A549 (cell line): ENCODE measurements at regions of chr19 and their contacts with region 1.

Region 1: DNA sequence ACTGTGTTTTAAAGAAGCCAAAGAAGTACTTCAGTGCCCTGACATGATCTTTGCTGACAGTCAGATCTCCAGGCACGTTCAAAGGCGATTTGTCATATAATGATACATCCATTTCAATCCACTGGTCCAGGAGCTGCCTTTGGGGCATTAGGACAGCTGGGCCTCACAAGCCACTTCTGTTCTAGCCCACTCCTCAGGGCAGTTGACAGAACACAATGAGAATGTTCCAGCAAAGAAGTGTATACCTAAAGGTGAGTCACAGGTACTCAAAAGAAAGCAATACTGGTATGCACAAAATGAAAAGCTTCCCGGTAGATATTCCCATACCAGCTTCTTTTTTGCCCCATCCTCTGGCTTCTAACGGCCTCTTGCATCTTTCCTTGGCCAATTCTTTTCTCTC is 12.5 kb upstream of the MAP3K10 start:
- DNase-seq: no peak
- ATAC-seq: peak in 1 of 2 experiments; percentile 24; a peak in 2 of 6 replicates
- H3K4me3 ChIP-seq: no peak overlapping the region
- H3K27ac ChIP-seq: no peak overlapping the region
- H3K4me1 ChIP-seq: no peaks in the 10 kb centered on the region; the same call in 2 of the 3 replicates
- CTCF ChIP-seq: no peak
- EP300 ChIP-seq: no peak
- POLR2A ChIP-seq: no peak
- RAD21 ChIP-seq: no peak

Region 2: GRCh38 chr19:40155749-40156265 is 22.9 kb before region 1 on chr19:
- CTCF ChIA-PET with region 1: interaction called, 92 read pairs
- POLR2A ChIA-PET with region 1: no interaction called
- DNase-seq: peak; percentile 80 to 84
- ATAC-seq: peak; percentile 87 to 93
- H3K4me3 ChIP-seq: no peak overlapping the region
- H3K27ac ChIP-seq: peak overlapping the region in 1 of 2 experiments; percentile 42; a peak in 3 of 6 replicates
- H3K4me1 ChIP-seq: no peaks in the 10 kb centered on the region
- CTCF ChIP-seq: peak; percentile 73
- EP300 ChIP-seq: no peak
- POLR2A ChIP-seq: no peak
- RAD21 ChIP-seq: peak; percentile 72 to 82

Region 3: DNA sequence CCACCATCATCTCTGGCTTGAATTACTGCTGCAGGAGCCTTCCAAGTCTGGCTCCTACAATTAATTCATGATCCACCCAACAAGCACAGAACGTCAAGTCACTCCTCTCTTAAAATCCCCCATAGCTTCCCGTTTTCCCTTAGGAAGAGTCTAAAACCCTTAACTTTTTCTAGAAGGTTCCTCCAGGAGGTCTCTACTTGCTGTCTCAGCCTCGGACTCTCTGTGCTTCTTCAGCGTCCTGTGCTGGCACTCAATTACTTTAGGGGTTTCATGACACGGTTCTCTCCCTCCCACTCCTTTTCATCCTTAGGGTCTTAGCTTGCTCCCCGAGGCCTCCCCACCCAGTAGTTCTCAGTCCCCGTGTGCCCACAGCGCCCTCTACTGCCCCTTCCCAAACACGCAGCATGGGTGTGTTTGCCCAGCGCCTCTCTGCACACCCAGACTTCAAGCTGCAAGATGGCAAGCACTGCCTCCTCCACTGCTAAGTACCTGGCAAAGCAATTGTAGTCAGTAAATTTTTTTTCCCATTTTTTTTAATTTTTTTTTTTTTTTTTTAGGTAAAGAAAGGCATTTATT is 13.3 kb before region 1 on chr19:
- CTCF ChIA-PET with region 1: interaction called, 92 read pairs
- POLR2A ChIA-PET with region 1: interaction called, 8 read pairs
- DNase-seq: peak in 1 of 2 experiments; percentile 77
- ATAC-seq: peak; percentile 71 to 83
- H3K4me3 ChIP-seq: no peak overlapping the region
- H3K27ac ChIP-seq: no peak overlapping the region
- H3K4me1 ChIP-seq: no peaks in the 10 kb centered on the region
- CTCF ChIP-seq: peak; percentile 61
- EP300 ChIP-seq: no peak
- POLR2A ChIP-seq: no peak
- RAD21 ChIP-seq: peak; percentile 53 to 64; a peak in 4 of 5 replicates

Region 4: DNA sequence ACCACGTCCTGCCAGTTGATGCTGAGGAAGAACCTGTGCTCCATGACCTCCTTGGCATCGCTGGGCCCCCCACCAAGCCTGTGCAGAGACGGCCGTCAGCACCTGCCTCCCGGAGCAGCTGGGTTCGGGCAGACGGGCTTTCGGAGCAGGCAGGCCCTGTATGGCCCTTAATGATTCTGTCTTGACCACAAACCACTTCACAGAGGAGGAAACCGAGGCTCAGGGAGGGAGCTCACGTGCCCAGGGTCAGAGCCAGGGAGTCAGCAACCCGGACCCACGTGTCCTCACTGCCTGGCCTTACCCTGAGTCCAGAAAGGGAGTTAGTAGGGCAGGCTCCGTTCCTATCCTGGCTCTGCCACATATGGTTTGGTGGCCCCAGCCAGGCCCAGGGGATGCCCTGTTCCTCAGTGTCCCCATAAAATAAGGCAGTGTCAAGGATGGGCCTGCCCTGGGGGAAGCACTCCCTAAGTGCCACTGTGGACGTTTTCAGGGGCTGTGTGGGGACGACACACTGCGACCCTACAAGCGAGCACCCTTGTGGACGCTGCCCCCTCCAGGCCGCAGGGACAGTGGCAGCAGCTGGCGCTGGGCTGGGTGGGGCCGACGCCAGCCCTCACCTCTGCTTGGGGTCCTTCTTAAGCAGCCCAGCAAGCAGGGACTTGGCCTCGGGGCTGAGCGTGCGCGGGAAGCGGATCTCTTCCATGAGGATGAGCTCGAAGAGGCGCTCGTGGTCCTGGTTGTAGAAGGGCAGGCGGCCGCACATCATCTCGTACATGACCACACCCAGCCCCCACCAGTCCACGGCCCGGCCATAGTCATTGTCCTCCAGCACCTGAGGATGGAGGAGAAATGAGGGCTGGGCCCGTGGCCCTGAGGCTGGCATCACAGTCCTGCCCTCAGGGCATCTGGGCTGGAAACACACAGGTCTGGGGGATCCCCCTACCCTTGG is 56.8 kb after region 1 on chr19:
- CTCF ChIA-PET with region 1: no interaction called
- POLR2A ChIA-PET with region 1: no interaction called
- DNase-seq: no peak
- ATAC-seq: peak; percentile 26 to 52; a peak in 3 of 6 replicates
- H3K4me3 ChIP-seq: no peak overlapping the region
- H3K27ac ChIP-seq: no peak overlapping the region
- H3K4me1 ChIP-seq: peaks cover 20% of the 10 kb centered on the region
- CTCF ChIP-seq: peak; percentile 29; the same call in 2 of the 3 replicates
- EP300 ChIP-seq: no peak
- POLR2A ChIP-seq: no peak
- RAD21 ChIP-seq: no peak